SK-N-SH (cell line): ENCODE measurements at regions of chr12 and their contacts with region 1.

Region 1: DNA sequence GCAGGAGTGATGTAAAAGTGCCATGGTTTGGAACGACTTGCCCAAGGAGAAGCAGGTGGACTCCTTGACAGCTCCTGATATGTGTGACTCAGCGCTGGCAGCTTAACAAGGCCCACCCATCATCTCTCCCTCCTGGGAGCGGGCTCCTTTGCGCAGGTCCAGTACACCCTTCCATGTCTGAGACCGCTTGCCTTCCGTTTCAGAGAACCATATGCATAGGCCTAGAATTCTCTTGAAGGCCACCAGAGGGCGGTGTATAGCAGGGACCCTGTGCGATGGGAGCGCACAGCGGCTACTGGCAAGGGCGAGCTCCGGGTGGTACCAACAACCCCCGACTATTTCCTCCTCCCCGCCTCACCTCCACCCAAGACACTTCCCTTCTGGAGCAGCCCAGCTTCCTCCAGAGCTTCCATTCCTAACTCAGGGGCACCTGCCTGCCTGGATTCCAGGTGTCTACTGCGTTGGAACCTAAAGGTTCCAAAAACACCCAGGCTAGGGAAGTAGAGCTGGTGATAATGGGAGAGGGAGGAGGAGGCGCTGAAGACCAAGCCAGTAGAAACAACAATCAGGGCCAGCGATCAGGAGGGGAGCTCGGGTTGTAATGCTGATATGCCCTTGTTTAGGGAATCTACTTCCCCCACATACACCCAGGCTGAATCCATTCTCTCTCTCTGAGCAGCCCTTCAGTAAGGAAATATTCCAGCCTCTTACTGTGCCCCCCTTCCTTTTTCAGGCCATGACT is 6.2 kb downstream of the DHH start:
- DNase-seq: peak; percentile 86
- H3K4me3 ChIP-seq: peak overlapping the region in 1 of 2 experiments; percentile 49; a peak in 2 of 4 replicates
- H3K27ac ChIP-seq: no peak overlapping the region
- H3K4me1 ChIP-seq: peaks cover 0 to 24% of the 10 kb centered on the region in 2 experiments; a peak in 1 of 4 replicates
- H3K27me3 ChIP-seq: no peaks in the 10 kb centered on the region
- CTCF ChIP-seq: peak; percentile 87
- EP300 ChIP-seq: no peak
- RAD21 ChIP-seq: peak; percentile 79

Region 2: DNA sequence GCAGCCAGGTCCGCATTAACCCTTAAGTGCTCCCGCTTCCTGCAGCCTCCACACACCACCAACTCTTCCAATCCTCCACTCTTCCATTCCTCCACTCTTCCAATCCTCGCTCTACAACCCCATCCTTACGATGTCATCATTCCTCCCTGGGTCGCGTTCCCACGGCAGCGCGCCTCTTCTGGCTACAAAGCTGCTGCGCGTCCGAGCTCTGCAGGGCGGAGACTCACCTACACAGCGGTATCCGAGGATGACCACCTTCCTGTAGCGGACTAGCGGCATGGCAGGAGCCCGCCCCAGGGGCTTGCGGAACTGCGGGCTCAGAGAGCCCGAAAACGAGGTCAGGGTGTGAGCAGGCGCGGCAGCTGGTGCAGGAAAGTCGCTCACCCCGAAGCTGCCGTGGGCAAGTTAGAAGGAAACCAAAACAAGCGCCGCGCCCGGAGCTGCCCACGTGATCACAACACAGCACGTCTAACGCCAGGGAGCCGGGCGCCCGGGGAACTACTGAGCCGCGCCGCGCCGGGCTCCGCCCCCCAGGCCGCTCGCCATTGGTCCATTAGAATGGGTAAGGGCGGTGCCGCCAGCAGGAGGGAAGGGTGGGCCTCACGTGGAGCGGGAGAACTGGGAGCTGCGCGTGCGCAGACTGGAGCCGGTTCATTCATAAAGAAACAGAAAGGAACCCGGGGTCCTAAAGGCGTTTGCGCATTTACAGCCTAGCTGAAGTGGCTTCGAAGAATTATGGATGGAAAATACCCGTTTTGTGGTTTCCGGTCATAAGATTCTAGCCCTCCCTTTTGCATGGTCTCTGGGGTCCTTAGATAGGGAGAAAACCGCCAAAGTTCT is 18.6 kb before region 1 on chr12 and contains the start of gene RHEBL1:
- CTCF ChIA-PET with region 1: interaction called, 300 read pairs
- POLR2A ChIA-PET with region 1: interaction called, 6 read pairs
- DNase-seq: peak; percentile 97
- H3K4me3 ChIP-seq: peak within 1 kb of the TSS; percentile 70 to 99
- H3K27ac ChIP-seq: peak within 1 kb of the TSS; percentile 60 to 67
- H3K4me1 ChIP-seq: peaks cover 3 to 5% of the 10 kb centered on the region in 2 experiments; a peak in 1 of 4 replicates
- H3K27me3 ChIP-seq: no peaks in the 10 kb centered on the region
- CTCF ChIP-seq: peak; percentile 28; the same call in 1 of the 2 replicates
- EP300 ChIP-seq: no peak
- RAD21 ChIP-seq: no peak
- polyA plus RNA-seq, gene RHEBL1: 2.2 and 2.3 TPM in 2 replicates

Region 3: DNA sequence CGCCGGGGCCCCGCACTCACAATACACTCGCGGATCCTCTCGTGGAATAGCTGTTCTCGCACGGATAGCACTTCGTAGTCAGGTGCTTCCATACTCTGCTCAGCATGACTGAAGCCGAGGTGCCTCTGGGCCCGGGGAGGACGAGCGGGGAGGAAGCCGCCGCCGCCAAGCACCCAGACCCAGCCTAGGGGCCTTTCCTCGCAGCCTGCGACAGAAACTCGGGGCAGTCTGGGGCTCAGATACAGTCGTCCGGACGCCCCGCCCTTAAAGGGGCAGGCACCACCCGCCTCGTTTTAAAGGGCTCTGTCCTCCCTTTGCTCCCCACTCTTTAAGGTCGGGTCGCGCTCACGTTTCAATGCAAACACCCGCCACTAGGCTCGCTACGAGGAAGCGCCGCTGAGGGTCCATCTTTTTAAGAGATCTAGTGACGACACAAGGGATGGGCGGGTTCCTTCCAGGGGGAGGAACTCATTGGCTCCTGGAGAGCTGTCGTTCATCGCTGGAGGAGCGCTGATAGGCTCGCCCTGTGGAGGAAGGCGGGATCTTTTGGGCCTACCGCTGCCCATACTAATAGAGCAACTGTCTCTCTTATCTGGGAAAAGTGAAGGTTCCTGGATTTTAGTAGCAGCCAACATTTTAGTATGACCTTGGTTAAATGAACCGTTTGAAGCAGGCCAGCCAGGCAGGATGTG is 22.2 kb after region 1 on chr12 and contains the start of gene LMBR1L:
- CTCF ChIA-PET with region 1: interaction called, 315 read pairs
- POLR2A ChIA-PET with region 1: interaction called, 9 read pairs
- DNase-seq: peak; percentile 97
- H3K4me3 ChIP-seq: peak within 1 kb of the TSS; percentile 82 to 100
- H3K27ac ChIP-seq: peak within 1 kb of the TSS; percentile 85 to 88
- H3K4me1 ChIP-seq: peaks cover 0 to 12% of the 10 kb centered on the region in 2 experiments; a peak in 1 of 4 replicates
- H3K27me3 ChIP-seq: no peaks in the 10 kb centered on the region
- CTCF ChIP-seq: peak; percentile 46
- EP300 ChIP-seq: no peak
- RAD21 ChIP-seq: peak; percentile 12; the same call in 1 of the 2 replicates
- polyA plus RNA-seq, gene LMBR1L: 43.0 and 61.4 TPM in 2 replicates

Region 4: DNA sequence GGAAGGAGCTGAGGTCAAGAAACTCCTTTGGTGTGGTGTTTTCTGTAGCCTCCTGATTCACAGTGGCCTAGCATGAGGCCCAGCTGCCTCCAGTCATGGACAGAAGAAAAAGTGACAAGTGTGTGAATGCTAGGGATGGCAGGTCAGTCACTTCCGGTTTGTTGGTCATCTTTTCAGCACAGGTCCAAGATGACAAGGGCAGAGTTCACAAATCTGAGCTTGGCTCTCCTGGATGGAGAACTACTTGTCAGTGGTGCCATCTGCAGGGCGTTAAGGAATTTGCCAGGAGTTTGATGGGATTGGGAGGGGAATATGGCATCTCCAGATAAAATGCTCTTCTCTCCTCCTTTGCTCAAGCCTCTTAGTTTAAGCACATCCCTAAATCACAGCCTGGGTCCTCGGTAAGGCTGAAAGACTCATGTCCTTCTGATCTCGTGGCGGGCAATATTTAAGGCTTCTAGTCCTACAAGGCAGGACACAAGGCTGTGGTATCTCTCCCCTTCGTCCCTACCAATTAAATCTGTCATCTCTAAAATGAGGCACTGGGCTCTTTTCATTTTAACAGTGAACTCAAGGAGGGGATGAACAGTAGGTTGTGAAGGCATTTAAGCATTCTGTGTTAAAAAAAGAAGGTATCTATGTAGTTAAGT is 32.8 kb after region 1 on chr12:
- CTCF ChIA-PET with region 1: interaction called, 147 read pairs
- POLR2A ChIA-PET with region 1: interaction called, 3 read pairs
- DNase-seq: peak; percentile 77
- H3K4me3 ChIP-seq: no peak overlapping the region; a peak in 1 of 4 replicates
- H3K27ac ChIP-seq: no peak overlapping the region
- H3K4me1 ChIP-seq: no peaks in the 10 kb centered on the region; a peak in 1 of 4 replicates
- H3K27me3 ChIP-seq: no peaks in the 10 kb centered on the region
- CTCF ChIP-seq: peak; percentile 72
- EP300 ChIP-seq: no peak
- RAD21 ChIP-seq: peak; percentile 85

Region 5: DNA sequence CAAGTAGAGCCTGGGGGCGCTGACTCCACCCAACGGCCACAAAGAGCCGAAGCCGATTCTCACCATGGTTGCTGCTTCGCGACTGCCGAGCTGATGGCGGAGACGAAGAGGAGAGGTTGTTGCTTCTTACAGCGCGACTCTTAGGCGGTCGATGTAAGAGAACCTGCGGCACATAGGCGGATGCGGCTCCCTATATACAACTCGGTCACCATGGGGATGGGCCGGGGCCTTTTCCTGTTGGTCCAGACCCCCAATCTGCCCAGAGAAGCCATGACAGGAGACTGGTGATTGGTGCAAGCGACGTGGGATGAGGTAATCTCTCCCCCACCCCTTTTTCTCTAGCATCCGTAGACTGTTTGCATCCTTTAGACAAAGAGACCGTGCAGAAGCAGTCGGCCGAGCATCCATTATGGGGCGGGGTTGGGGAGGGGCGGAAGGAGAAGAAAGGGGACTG is 100.6 kb after region 1 on chr12 and contains the start of gene TUBA1A:
- CTCF ChIA-PET with region 1: interaction called, 21 read pairs
- POLR2A ChIA-PET with region 1: interaction called, 3 read pairs
- DNase-seq: peak; percentile 93
- H3K4me3 ChIP-seq: peak within 1 kb of the TSS; percentile 91 to 94
- H3K27ac ChIP-seq: peak within 1 kb of the TSS; percentile 98
- H3K4me1 ChIP-seq: peaks cover 6 to 28% of the 10 kb centered on the region in 2 experiments; a peak in 2 of 4 replicates
- H3K27me3 ChIP-seq: no peaks in the 10 kb centered on the region
- CTCF ChIP-seq: no peak
- EP300 ChIP-seq: peak; percentile 16 to 63; a peak in 3 of 4 replicates
- RAD21 ChIP-seq: no peak
- polyA plus RNA-seq, gene TUBA1A: 1,427 and 1,906 TPM in 2 replicates

Region 6: GRCh38 chr12:49232940-49233841 is 144.8 kb after region 1 on chr12:
- CTCF ChIA-PET with region 1: interaction called, 30 read pairs
- POLR2A ChIA-PET with region 1: no interaction called
- DNase-seq: peak; percentile 64
- H3K4me3 ChIP-seq: peak overlapping the region in 1 of 2 experiments; percentile 41; a peak in 2 of 4 replicates
- H3K27ac ChIP-seq: peak overlapping the region; percentile 79 to 90
- H3K4me1 ChIP-seq: peaks cover 23 to 25% of the 10 kb centered on the region in 2 experiments
- H3K27me3 ChIP-seq: no peaks in the 10 kb centered on the region
- CTCF ChIP-seq: peak; percentile 41
- EP300 ChIP-seq: peak in 1 of 2 experiments; percentile 44; a peak in 1 of 4 replicates
- RAD21 ChIP-seq: no peak

Region 7: GRCh38 chr12:49244176-49244575 is 155.8 kb after region 1 on chr12:
- CTCF ChIA-PET with region 1: interaction called, 14 read pairs
- POLR2A ChIA-PET with region 1: no interaction called
- DNase-seq: no peak
- H3K4me3 ChIP-seq: no peak overlapping the region
- H3K27ac ChIP-seq: peak overlapping the region; percentile 59 to 96; a peak in 3 of 4 replicates
- H3K4me1 ChIP-seq: peaks cover 0 to 13% of the 10 kb centered on the region in 2 experiments; a peak in 2 of 4 replicates
- H3K27me3 ChIP-seq: no peaks in the 10 kb centered on the region
- CTCF ChIP-seq: no peak
- EP300 ChIP-seq: no peak
- RAD21 ChIP-seq: no peak